ENCODE measurements at regions of chr6 and their contacts with region 1.

Region 1: GRCh38 chr6:131063028-131063763 is at the start of gene EPB41L2:
- DNase-seq: peak; percentile 51 to 92 (median 72)
- ATAC-seq: peak; percentile 88
- H3K4me3 ChIP-seq: peak within 1 kb of the TSS; percentile 86
- H3K4me3 Mint-ChIP-seq: peak within 1 kb of the TSS; percentile 91
- H3K27ac ChIP-seq: no peak within 1 kb of the TSS
- H3K27ac Mint-ChIP-seq: peak within 1 kb of the TSS; percentile 45
- H3K4me1 ChIP-seq: peaks cover 18% of the 10 kb centered on the region
- H3K4me1 Mint-ChIP-seq: peaks cover 26% of the 10 kb centered on the region
- H3K27me3 ChIP-seq: no peaks in the 10 kb centered on the region
- H3K27me3 Mint-ChIP-seq: no peaks in the 10 kb centered on the region
- CTCF ChIP-seq: no peak
- total RNA-seq, gene EPB41L2: 9.5 to 12.3 TPM

Region 2: GRCh38 chr6:131042664-131043063 is 20.5 kb before region 1 on chr6:
- CTCF ChIA-PET with region 1: no interaction called
- POLR2A ChIA-PET with region 1: no interaction called
- intact Hi-C with region 1: no loop called
- DNase-seq: no peak
- ATAC-seq: no peak
- H3K4me3 ChIP-seq: no peak overlapping the region
- H3K4me3 Mint-ChIP-seq: no peak overlapping the region
- H3K27ac ChIP-seq: no peak overlapping the region
- H3K27ac Mint-ChIP-seq: no peak overlapping the region
- H3K4me1 ChIP-seq: no peaks in the 10 kb centered on the region
- H3K4me1 Mint-ChIP-seq: no peaks in the 10 kb centered on the region
- H3K27me3 ChIP-seq: no peaks in the 10 kb centered on the region
- H3K27me3 Mint-ChIP-seq: no peaks in the 10 kb centered on the region
- CTCF ChIP-seq: no peak

Region 3: DNA sequence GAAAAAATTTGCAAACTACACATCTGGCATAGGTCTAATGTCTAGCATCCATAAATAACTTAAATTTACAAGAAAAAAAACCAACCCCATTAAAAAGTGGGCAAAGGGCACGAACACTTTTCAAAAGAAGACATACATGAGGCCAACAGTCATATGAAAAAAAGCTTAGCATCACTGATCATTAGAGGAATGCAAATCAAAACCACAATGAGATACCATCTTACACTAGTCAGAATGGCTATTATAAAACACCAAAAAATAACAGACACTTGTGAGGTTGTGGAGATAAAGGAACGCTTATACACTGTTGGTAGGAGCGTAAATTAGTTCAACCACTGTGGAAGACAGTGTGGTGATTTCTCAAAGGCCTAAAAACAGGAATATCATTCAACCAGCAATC is 33.6 kb after region 1 on chr6:
- CTCF ChIA-PET with region 1: no interaction called
- POLR2A ChIA-PET with region 1: no interaction called
- intact Hi-C with region 1: no loop called
- DNase-seq: no peak
- ATAC-seq: no peak
- H3K4me3 ChIP-seq: no peak overlapping the region
- H3K4me3 Mint-ChIP-seq: no peak overlapping the region
- H3K27ac ChIP-seq: no peak overlapping the region
- H3K27ac Mint-ChIP-seq: no peak overlapping the region
- H3K4me1 ChIP-seq: no peaks in the 10 kb centered on the region
- H3K4me1 Mint-ChIP-seq: no peaks in the 10 kb centered on the region
- H3K27me3 ChIP-seq: no peaks in the 10 kb centered on the region
- H3K27me3 Mint-ChIP-seq: no peaks in the 10 kb centered on the region
- CTCF ChIP-seq: no peak

Region 4: GRCh38 chr6:131116749-131117360 is 53.7 kb after region 1 on chr6:
- CTCF ChIA-PET with region 1: no interaction called
- POLR2A ChIA-PET with region 1: no interaction called
- intact Hi-C with region 1: loop called in 1 of 2 experiments (anchors 5 kb)
- DNase-seq: peak in 3 of 14 experiments; percentile 51 to 68 (median 64)
- ATAC-seq: no peak
- H3K4me3 ChIP-seq: no peak overlapping the region
- H3K4me3 Mint-ChIP-seq: no peak overlapping the region
- H3K27ac ChIP-seq: no peak overlapping the region
- H3K27ac Mint-ChIP-seq: no peak overlapping the region
- H3K4me1 ChIP-seq: no peaks in the 10 kb centered on the region
- H3K4me1 Mint-ChIP-seq: no peaks in the 10 kb centered on the region
- H3K27me3 ChIP-seq: no peaks in the 10 kb centered on the region
- H3K27me3 Mint-ChIP-seq: no peaks in the 10 kb centered on the region
- CTCF ChIP-seq: peak; percentile 66

Measured in CD4-positive, alpha-beta T cell (primary cell).